Naive thymus-derived CD4-positive, alpha-beta T cell (primary cell): ENCODE measurements at regions of chr16 and their contacts with region 1.

Region 1: DNA sequence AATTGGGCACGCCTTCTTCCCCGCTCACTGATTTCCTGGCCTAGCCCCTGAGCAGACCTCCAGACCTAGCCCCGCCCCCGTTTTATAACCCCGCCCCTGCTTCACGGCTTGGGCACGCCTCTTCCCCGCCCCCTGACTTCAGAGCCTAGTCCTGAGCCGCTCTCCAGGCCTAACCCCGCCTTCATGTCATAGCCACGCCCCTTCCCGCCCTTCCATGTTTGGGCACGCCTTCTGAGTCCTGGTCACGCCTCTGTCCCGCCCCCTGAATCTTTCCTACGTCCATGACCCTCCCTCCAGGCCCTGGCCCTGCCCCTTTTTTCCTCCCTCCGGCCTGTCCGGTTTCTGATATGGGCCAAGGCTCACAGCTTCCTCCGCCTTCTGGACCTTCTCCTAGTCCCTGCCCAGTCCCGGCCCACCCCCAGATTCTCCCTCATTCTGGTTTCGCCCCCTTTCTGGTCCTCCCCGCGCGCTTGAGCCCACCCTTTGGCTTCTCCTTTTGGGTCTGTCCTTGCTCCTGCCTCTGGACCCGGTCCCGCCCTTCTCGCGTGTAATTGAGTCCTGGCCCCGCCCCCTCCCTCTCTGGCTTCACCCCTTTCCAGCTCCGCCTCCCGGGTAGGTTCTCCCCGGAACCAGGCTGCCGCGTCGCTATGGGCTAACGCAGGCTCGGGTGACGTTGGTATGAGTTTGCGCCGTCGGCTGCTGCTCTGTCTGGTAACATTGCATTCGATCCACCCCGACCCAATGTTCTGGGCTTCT is 15.1 kb upstream of the EEF2K start:
- DNase-seq: peak; percentile 91 to 100 (median 99)
- ATAC-seq: peak; percentile 78
- H3K4me3 ChIP-seq: peak overlapping the region; percentile 92
- H3K4me3 Mint-ChIP-seq: peak overlapping the region; percentile 78 to 99 (median 95)
- H3K27ac ChIP-seq: peak overlapping the region; percentile 99
- H3K27ac Mint-ChIP-seq: peak overlapping the region; percentile 98 to 100 (median 100)
- H3K4me1 ChIP-seq: peaks cover 47 to 59% of the 10 kb centered on the region in 2 donors
- H3K4me1 Mint-ChIP-seq: peaks cover 41 to 74% (median 62%) of the 10 kb centered on the region in 7 donors
- H3K27me3 ChIP-seq: no peaks in the 10 kb centered on the region
- H3K27me3 Mint-ChIP-seq: peaks cover 0 to 5% (median 0%) of the 10 kb centered on the region in 5 donors

Region 2: GRCh38 chr16:20900299-20901067 is 1290.5 kb before region 1 on chr16 and contains the starts of genes DCUN1D3 and LYRM1:
- CTCF ChIA-PET with region 1: no interaction called
- POLR2A ChIA-PET with region 1: interaction called, 3 read pairs
- intact Hi-C with region 1: loop called in 1 of 2 experiments (anchors 1 kb)
- DNase-seq: peak; percentile 65 to 90 (median 79)
- ATAC-seq: peak; percentile 80
- H3K4me3 ChIP-seq: peak within 1 kb of the TSS; percentile 88
- H3K4me3 Mint-ChIP-seq: peak within 1 kb of the TSS; percentile 87 to 99 (median 96)
- H3K27ac ChIP-seq: peak within 1 kb of the TSS; percentile 97
- H3K27ac Mint-ChIP-seq: peak within 1 kb of the TSS; percentile 94 to 99 (median 97)
- H3K4me1 ChIP-seq: peaks cover 23 to 29% of the 10 kb centered on the region in 2 donors
- H3K4me1 Mint-ChIP-seq: peaks cover 52 to 76% (median 71%) of the 10 kb centered on the region in 7 donors
- H3K27me3 ChIP-seq: no peaks in the 10 kb centered on the region
- H3K27me3 Mint-ChIP-seq: no peaks in the 10 kb centered on the region
- total RNA-seq, gene DCUN1D3: 4.0 to 15.7 (median 6.5) TPM
- total RNA-seq, gene LYRM1: 13.4 to 29.1 (median 20.0) TPM

Region 3: DNA sequence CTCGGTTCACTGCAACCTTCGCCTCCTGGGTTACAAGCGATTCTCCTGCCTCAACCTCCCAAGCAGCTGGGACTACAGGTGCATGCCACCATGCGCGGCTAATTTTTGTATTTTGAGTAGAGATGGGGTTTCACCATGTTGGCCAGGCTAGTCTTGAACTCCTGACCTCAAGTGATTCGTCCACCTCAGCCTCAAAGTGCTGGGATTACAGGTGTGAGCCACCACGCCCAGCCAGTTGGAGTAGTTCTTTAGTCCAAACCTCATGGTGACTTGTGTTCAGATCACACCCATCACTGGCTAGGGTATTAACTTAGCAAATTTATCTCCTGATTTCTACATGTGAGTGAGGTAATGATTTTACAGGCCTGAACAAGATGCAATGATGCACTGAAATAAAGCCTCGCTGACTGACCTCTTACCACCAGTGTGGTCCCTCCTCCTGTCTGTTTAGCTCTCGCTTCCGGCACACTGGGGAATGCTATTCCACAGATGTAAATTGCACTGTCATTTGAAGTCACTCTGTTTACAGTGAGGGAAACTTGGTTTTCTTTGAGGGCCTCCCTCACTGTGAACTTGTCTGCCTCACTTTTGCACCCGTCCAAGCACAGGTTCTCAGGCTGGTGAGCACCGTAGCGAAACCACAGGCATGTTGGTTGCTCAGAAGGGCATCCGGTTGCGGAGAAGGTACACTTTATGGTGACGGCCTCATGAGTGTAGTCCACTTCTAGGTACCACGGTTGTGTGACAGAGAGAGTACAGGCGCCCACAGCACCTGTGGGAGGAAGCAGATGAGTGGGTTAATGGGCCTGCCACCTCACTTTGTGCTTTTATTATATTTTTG is 544.0 kb before region 1 on chr16:
- CTCF ChIA-PET with region 1: no interaction called
- POLR2A ChIA-PET with region 1: interaction called, 4 read pairs
- intact Hi-C with region 1: loop called (anchors 2 kb)
- DNase-seq: peak in 8 of 9 donors; percentile 66 to 79 (median 71)
- ATAC-seq: peak; percentile 83
- H3K4me3 ChIP-seq: peak overlapping the region; percentile 57
- H3K4me3 Mint-ChIP-seq: peak overlapping the region; percentile 69 to 90 (median 81)
- H3K27ac ChIP-seq: peak overlapping the region; percentile 77
- H3K27ac Mint-ChIP-seq: peak overlapping the region; percentile 91 to 97 (median 95)
- H3K4me1 ChIP-seq: peaks cover 43 to 50% of the 10 kb centered on the region in 2 donors
- H3K4me1 Mint-ChIP-seq: peaks cover 26 to 69% (median 56%) of the 10 kb centered on the region in 7 donors
- H3K27me3 ChIP-seq: no peaks in the 10 kb centered on the region
- H3K27me3 Mint-ChIP-seq: no peaks in the 10 kb centered on the region

Region 4: GRCh38 chr16:22001591-22001990 is 189.4 kb before region 1 on chr16:
- CTCF ChIA-PET with region 1: interaction called, 31 read pairs
- POLR2A ChIA-PET with region 1: interaction called, 40 read pairs
- intact Hi-C with region 1: loop called (anchors 1 kb)
- DNase-seq: no peak
- ATAC-seq: no peak
- H3K4me3 ChIP-seq: no peak overlapping the region
- H3K4me3 Mint-ChIP-seq: peak overlapping the region in 2 of 10 donors; percentile 26 to 59
- H3K27ac ChIP-seq: no peak overlapping the region
- H3K27ac Mint-ChIP-seq: peak overlapping the region in 2 of 9 donors; percentile 13 to 65
- H3K4me1 ChIP-seq: peaks cover 0 to 9% of the 10 kb centered on the region in 2 donors
- H3K4me1 Mint-ChIP-seq: peaks cover 6 to 21% (median 15%) of the 10 kb centered on the region in 7 donors
- H3K27me3 ChIP-seq: no peaks in the 10 kb centered on the region
- H3K27me3 Mint-ChIP-seq: peaks cover 0 to 7% (median 0%) of the 10 kb centered on the region in 5 donors

Region 5: DNA sequence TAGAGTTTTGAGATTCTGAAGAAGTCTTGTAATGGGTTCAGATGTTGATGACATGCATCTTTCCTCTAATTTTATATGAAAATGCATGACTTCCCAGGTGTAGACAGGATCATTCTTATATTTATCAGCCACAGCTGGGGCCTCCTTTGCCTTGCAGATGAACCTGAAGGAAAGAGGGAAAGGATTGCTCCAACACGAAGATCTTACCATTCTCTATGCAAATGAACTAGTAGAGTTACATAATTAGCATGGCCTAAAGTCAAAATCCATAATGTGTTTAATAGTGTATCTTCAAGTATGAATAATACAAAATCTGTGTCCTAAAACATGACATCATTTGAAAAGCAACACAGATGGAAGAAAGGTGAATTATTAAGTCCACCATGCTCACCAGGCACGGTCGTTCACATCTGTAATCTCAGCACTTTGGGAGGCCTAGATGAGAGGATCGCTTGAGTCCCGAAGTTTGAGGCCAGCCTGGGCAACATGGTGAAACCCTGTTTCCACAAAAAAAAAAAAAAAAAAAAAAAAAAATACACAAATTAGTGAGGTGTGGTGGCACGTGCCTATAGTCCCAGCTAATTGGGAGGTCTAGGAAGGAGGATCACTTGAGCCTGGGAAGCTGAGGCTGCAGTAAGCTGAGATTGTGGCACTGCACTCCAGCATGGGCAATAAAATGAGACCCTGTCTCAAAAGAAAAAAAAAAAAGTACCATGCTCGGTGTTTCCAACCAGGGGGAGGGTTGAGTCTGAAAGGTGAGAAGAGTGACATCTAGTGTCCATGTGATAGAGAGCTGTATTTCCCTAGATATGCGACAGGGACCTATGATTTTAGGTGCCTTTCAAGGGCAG is 92.3 kb before region 1 on chr16:
- CTCF ChIA-PET with region 1: interaction called, 6 read pairs
- POLR2A ChIA-PET with region 1: no interaction called
- intact Hi-C with region 1: loop called (anchors 1 kb)
- DNase-seq: peak in 7 of 9 donors; percentile 15 to 55 (median 42)
- ATAC-seq: peak; percentile 76
- H3K4me3 ChIP-seq: no peak overlapping the region
- H3K4me3 Mint-ChIP-seq: peak overlapping the region in 4 of 10 donors; percentile 34 to 74 (median 53)
- H3K27ac ChIP-seq: no peak overlapping the region
- H3K27ac Mint-ChIP-seq: peak overlapping the region in 1 of 9 donors; percentile 19
- H3K4me1 ChIP-seq: no peaks in the 10 kb centered on the region
- H3K4me1 Mint-ChIP-seq: peaks cover 0 to 5% (median 0%) of the 10 kb centered on the region in 7 donors
- H3K27me3 ChIP-seq: no peaks in the 10 kb centered on the region
- H3K27me3 Mint-ChIP-seq: peaks cover 9 to 24% (median 17%) of the 10 kb centered on the region in 5 donors

Region 6: GRCh38 chr16:22206013-22206841 is 15.3 kb after region 1 on chr16 and contains the start of gene EEF2K:
- CTCF ChIA-PET with region 1: interaction called, 8 read pairs
- POLR2A ChIA-PET with region 1: interaction called, 146 read pairs
- intact Hi-C with region 1: loop called (anchors 1 kb)
- DNase-seq: peak; percentile 44 to 83 (median 66)
- ATAC-seq: peak; percentile 94
- H3K4me3 ChIP-seq: peak within 1 kb of the TSS; percentile 72
- H3K4me3 Mint-ChIP-seq: peak within 1 kb of the TSS; percentile 87 to 99 (median 96)
- H3K27ac ChIP-seq: peak within 1 kb of the TSS; percentile 80
- H3K27ac Mint-ChIP-seq: peak within 1 kb of the TSS; percentile 66 to 94 (median 85)
- H3K4me1 ChIP-seq: peaks cover 9 to 13% of the 10 kb centered on the region in 2 donors
- H3K4me1 Mint-ChIP-seq: peaks cover 14 to 56% (median 28%) of the 10 kb centered on the region in 7 donors
- H3K27me3 ChIP-seq: no peaks in the 10 kb centered on the region
- H3K27me3 Mint-ChIP-seq: no peaks in the 10 kb centered on the region
- total RNA-seq, gene EEF2K: 15.3 to 27.9 (median 21.8) TPM

Region 7: DNA sequence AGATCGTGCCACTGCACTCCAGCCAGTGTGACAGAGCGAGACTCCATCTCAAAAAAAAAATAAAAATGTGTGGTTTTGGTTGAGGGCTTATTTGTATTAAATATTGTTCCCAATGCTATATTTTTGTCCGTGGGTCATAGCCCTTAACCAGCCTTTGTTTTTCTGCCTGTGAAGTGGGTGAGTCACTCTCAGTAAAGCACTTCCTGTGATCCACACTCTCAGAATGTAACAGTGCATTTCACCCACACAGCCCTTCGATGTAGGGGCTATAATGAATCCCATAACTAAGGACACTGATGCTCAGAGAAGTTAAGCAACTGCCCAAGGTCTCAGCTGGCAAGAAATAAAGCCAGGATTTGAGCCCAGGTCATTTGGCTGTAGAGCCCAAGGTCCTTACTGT is 71.5 kb after region 1 on chr16:
- CTCF ChIA-PET with region 1: no interaction called
- POLR2A ChIA-PET with region 1: no interaction called
- intact Hi-C with region 1: no loop called
- DNase-seq: no peak
- ATAC-seq: no peak
- H3K4me3 ChIP-seq: no peak overlapping the region
- H3K4me3 Mint-ChIP-seq: no peak overlapping the region
- H3K27ac ChIP-seq: no peak overlapping the region
- H3K27ac Mint-ChIP-seq: peak overlapping the region in 3 of 9 donors; percentile 32 to 47 (median 46)
- H3K4me1 ChIP-seq: peaks cover 0 to 7% of the 10 kb centered on the region in 2 donors
- H3K4me1 Mint-ChIP-seq: peaks cover 10 to 36% (median 17%) of the 10 kb centered on the region in 7 donors
- H3K27me3 ChIP-seq: no peaks in the 10 kb centered on the region
- H3K27me3 Mint-ChIP-seq: no peaks in the 10 kb centered on the region

Region 8: DNA sequence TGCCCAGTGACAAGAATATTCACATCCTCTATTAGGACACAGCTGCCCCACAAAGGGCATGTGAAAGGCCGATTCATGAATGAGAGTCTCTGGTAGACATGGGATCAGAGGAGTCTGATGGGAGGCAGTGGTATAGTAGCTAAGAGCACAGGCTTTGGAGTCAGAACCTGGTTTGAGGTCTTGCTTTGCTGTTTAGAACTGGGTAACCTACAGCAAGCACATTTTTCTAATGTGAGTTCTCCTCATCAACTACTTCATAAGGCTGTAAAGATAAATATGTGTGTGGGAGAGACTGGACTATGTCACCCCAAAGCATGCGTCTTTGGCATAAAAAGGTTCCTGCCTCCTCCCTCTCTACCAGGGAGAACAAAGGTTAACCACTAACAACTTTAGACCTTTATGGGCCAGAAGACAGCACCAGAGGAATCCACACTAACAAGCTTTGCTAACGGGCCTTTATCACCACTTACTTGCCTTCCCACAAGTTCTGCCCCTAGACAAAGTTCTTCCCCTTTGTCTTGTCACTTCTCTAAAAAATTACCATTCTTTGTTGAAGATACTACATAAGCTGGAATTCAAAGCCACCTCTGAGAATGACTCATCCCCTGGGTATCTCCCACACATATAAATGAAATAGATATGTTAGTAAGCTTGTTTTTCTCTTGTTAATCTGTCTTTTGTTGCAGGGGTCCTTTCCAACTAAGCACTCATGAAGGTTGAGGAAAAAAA is 162.4 kb after region 1 on chr16:
- CTCF ChIA-PET with region 1: interaction called, 5 read pairs
- POLR2A ChIA-PET with region 1: interaction called, 8 read pairs
- intact Hi-C with region 1: loop called in 1 of 2 experiments (anchors 5 kb)
- DNase-seq: peak in 2 of 9 donors; percentile 36 to 48
- ATAC-seq: peak; percentile 63
- H3K4me3 ChIP-seq: no peak overlapping the region
- H3K4me3 Mint-ChIP-seq: peak overlapping the region; percentile 8 to 62 (median 39)
- H3K27ac ChIP-seq: peak overlapping the region; percentile 48
- H3K27ac Mint-ChIP-seq: peak overlapping the region; percentile 69 to 88 (median 83)
- H3K4me1 ChIP-seq: peaks cover 44 to 52% of the 10 kb centered on the region in 2 donors
- H3K4me1 Mint-ChIP-seq: peaks cover 28 to 70% (median 61%) of the 10 kb centered on the region in 7 donors
- H3K27me3 ChIP-seq: no peaks in the 10 kb centered on the region
- H3K27me3 Mint-ChIP-seq: no peaks in the 10 kb centered on the region